ENCODE measurements at regions of chr6 and their contacts with region 1.

Region 1: GRCh38 chr6:37169496-37170272 is at the start of gene PIM1:
- DNase-seq: peak; percentile 62
- ATAC-seq: peak; percentile 88
- H3K4me3 ChIP-seq: peak within 1 kb of the TSS; percentile 83
- H3K27ac ChIP-seq: peak within 1 kb of the TSS; percentile 65
- H3K4me1 ChIP-seq: peaks cover 16% of the 10 kb centered on the region
- H3K27me3 ChIP-seq: no peaks in the 10 kb centered on the region
- CTCF ChIP-seq: peak in 1 of 3 experiments; percentile 6; a peak in 1 of 6 replicates
- EP300 ChIP-seq: no peak
- POLR2A ChIP-seq: peak; percentile 81
- RAD21 ChIP-seq: no peak
- polyA plus RNA-seq, gene PIM1: 0.66 to 3.0 TPM

Region 2: DNA sequence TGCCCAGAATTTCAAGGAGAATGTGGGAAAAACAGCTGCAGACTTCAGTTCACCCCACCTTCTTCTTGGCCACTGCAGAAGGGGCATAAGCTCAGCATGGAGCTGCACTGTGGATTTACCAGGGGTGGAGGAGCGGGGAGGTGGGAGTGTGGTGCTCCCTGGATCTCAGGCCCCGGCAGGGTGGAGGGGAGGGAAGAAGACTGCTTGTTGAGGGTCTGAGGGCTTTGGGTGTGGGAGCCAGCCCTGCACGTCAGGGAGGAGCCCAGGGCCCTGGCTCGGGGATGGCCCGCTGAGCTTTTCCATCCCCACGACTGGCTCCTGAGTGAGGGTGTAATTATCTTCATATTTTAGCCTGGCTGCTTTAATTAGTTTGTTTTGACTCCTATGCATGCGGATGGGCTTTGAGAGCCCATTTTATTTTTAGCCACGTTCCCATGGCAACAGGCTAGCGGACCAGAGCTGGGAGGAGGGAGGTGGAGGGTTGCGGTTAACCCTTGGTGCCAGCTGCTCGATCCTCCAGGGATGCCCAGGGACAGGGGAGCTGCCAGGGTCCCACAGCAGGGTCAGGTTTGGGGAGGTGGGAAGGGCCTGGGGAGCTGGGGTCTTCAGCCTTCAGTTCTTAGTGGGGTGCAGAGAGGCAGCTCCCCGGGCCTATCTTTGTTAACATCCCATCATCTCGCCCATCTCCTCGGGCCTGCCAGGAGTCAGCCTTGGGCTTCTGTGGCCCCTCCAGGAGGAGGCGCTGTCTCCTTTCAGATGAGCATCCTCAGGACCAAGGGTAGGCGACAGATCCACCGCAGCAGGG is 403.9 kb before region 1 on chr6:
- CTCF ChIA-PET with region 1: interaction called, 21 read pairs
- POLR2A ChIA-PET with region 1: interaction called, 3 read pairs
- RAD21 ChIA-PET with region 1: interaction called, 7 read pairs
- SMC1A ChIA-PET with region 1: interaction called, 14 read pairs
- in situ Hi-C with region 1: loop called (anchors 10 kb)
- intact Hi-C with region 1: loop called (anchors 10 kb)
- DNase-seq: no peak
- ATAC-seq: peak; percentile 98
- H3K4me3 ChIP-seq: no peak overlapping the region
- H3K27ac ChIP-seq: no peak overlapping the region
- H3K4me1 ChIP-seq: peaks cover 17% of the 10 kb centered on the region
- H3K27me3 ChIP-seq: no peaks in the 10 kb centered on the region
- CTCF ChIP-seq: peak; percentile 97 to 98 (median 98); a peak in 5 of 6 replicates
- EP300 ChIP-seq: no peak
- POLR2A ChIP-seq: no peak
- RAD21 ChIP-seq: peak; percentile 98

Region 3: GRCh38 chr6:37029249-37029971 is 140.3 kb before region 1 on chr6:
- CTCF ChIA-PET with region 1: interaction called, 76 read pairs
- POLR2A ChIA-PET with region 1: interaction called, 3 read pairs
- RAD21 ChIA-PET with region 1: interaction called, 46 read pairs
- SMC1A ChIA-PET with region 1: interaction called, 41 read pairs
- in situ Hi-C with region 1: loop called (anchors 10 kb)
- intact Hi-C with region 1: loop called (anchors 1 kb)
- DNase-seq: no peak
- ATAC-seq: peak; percentile 90
- H3K4me3 ChIP-seq: no peak overlapping the region
- H3K27ac ChIP-seq: no peak overlapping the region
- H3K4me1 ChIP-seq: no peaks in the 10 kb centered on the region
- H3K27me3 ChIP-seq: no peaks in the 10 kb centered on the region
- CTCF ChIP-seq: peak; percentile 68 to 75 (median 72)
- EP300 ChIP-seq: no peak
- POLR2A ChIP-seq: no peak
- RAD21 ChIP-seq: peak; percentile 88

Region 4: GRCh38 chr6:37102279-37103168 is 67.2 kb before region 1 on chr6:
- CTCF ChIA-PET with region 1: interaction called, 6 read pairs
- POLR2A ChIA-PET with region 1: interaction called, 4 read pairs
- RAD21 ChIA-PET with region 1: interaction called, 28 read pairs
- SMC1A ChIA-PET with region 1: interaction called, 9 read pairs
- in situ Hi-C with region 1: no loop called
- intact Hi-C with region 1: no loop called
- DNase-seq: no peak
- ATAC-seq: peak; percentile 93
- H3K4me3 ChIP-seq: peak overlapping the region; percentile 47
- H3K27ac ChIP-seq: no peak overlapping the region
- H3K4me1 ChIP-seq: peaks cover 35% of the 10 kb centered on the region
- H3K27me3 ChIP-seq: no peaks in the 10 kb centered on the region
- CTCF ChIP-seq: no peak
- EP300 ChIP-seq: peak in 1 of 2 experiments; percentile 90; a peak in 2 of 4 replicates
- POLR2A ChIP-seq: peak; percentile 41; the same call in 1 of the 2 replicates
- RAD21 ChIP-seq: no peak

Region 5: DNA sequence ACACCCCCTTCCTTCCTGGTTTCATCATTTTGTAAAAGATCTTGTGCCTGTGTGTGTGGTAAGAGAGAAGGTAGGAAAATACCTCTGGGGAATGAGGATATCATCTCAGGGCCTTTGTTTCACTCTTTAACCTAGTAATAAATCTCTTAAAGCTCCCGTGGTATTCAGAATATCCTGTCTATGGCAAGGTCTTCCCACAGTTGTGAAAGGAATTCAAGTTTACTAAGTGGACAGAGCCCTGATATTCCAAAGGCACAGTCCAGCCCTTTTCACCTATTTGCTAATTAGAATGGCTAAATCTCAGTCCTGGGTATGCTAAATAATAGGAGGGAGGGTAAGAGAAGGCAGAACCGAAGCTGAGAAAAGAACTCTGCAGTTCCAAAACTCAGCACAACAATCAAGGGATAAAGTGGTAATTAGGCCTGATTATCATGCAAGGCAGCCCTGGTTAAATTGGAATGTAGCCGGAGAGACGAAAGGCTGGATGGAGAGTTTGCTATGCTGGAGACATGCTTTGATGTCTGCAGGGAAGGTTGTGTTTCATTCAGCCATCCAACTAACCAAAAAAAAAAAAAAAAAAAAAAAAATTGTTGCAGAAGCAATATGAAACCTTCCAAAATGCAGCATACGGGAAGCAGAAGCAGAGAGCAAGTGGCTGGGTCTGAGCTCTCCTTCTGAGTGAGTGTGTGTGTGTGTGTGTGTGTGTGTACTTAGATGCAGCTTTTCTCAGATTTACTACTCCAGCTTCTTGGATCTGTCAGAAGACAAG is 28.2 kb before region 1 on chr6:
- CTCF ChIA-PET with region 1: interaction called, 8 read pairs
- POLR2A ChIA-PET with region 1: interaction called, 4 read pairs
- RAD21 ChIA-PET with region 1: interaction called, 39 read pairs
- SMC1A ChIA-PET with region 1: interaction called, 12 read pairs
- in situ Hi-C with region 1: no loop called
- intact Hi-C with region 1: no loop called
- DNase-seq: no peak
- ATAC-seq: peak; percentile 44
- H3K4me3 ChIP-seq: no peak overlapping the region
- H3K27ac ChIP-seq: no peak overlapping the region
- H3K4me1 ChIP-seq: peaks cover 47% of the 10 kb centered on the region
- H3K27me3 ChIP-seq: no peaks in the 10 kb centered on the region
- CTCF ChIP-seq: no peak
- EP300 ChIP-seq: no peak
- POLR2A ChIP-seq: no peak
- RAD21 ChIP-seq: no peak

Region 6: DNA sequence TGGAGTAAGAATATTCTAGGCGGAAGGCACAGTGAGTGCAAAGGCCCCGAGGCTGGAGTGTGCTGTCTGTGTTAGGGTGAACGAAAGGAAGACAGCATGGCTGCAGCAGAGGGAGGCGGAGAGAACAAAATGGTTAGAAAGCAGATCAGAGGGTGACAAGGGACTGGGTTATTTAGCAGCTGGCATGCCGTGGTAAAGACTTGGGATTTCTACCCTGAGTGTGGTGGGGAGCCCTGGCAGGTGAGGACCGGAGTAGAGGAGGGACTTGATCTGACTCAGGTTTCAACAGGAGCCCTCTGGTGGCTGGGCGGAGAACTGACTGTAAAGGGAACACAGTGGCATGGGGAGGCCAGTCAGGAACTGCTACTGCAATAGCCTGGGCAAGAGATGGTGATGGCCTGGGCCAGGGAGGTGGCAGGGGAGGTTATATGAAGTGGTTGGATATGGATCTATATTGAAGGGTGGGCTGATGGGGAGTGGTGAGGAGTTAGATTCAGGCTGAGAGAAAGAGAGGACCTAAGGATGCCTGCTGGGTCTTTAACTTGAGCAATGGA is 38.3 kb after region 1 on chr6:
- CTCF ChIA-PET with region 1: interaction called, 75 read pairs
- POLR2A ChIA-PET with region 1: interaction called, 3 read pairs
- RAD21 ChIA-PET with region 1: interaction called, 34 read pairs
- SMC1A ChIA-PET with region 1: interaction called, 18 read pairs
- in situ Hi-C with region 1: no loop called
- intact Hi-C with region 1: loop called (anchors 1 kb)
- DNase-seq: peak; percentile 28
- ATAC-seq: peak; percentile 96
- H3K4me3 ChIP-seq: no peak overlapping the region
- H3K27ac ChIP-seq: no peak overlapping the region
- H3K4me1 ChIP-seq: peaks cover 3% of the 10 kb centered on the region; the same call in 1 of the 2 replicates
- H3K27me3 ChIP-seq: no peaks in the 10 kb centered on the region
- CTCF ChIP-seq: peak; percentile 87 to 93 (median 87)
- EP300 ChIP-seq: no peak
- POLR2A ChIP-seq: no peak
- RAD21 ChIP-seq: peak; percentile 63

Region 7: DNA sequence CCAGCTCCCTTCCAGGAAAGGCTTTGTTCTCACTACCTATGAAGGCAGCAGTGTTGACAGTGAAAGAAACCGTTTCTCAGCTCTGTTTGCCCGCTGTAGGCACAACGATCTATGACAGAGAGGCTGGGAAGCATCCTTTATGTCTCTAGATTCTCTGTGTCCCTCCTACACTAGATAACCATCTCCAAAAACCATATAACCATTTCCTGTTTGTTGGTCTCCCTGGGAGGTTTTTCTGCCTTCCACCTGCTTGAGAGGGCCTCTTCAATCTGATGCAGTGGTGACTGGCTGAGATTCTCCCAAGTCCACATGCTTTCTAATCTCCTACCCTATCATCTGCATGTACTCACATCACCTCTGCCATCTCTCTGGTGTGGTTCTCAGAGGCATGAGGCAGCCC is 120.2 kb after region 1 on chr6:
- CTCF ChIA-PET with region 1: no interaction called
- POLR2A ChIA-PET with region 1: no interaction called
- RAD21 ChIA-PET with region 1: no interaction called
- SMC1A ChIA-PET with region 1: no interaction called
- in situ Hi-C with region 1: no loop called
- intact Hi-C with region 1: no loop called
- DNase-seq: no peak
- ATAC-seq: no peak
- H3K4me3 ChIP-seq: no peak overlapping the region
- H3K27ac ChIP-seq: no peak overlapping the region
- H3K4me1 ChIP-seq: peaks cover 18% of the 10 kb centered on the region
- H3K27me3 ChIP-seq: no peaks in the 10 kb centered on the region
- CTCF ChIP-seq: no peak
- EP300 ChIP-seq: no peak
- POLR2A ChIP-seq: no peak
- RAD21 ChIP-seq: no peak

Region 8: DNA sequence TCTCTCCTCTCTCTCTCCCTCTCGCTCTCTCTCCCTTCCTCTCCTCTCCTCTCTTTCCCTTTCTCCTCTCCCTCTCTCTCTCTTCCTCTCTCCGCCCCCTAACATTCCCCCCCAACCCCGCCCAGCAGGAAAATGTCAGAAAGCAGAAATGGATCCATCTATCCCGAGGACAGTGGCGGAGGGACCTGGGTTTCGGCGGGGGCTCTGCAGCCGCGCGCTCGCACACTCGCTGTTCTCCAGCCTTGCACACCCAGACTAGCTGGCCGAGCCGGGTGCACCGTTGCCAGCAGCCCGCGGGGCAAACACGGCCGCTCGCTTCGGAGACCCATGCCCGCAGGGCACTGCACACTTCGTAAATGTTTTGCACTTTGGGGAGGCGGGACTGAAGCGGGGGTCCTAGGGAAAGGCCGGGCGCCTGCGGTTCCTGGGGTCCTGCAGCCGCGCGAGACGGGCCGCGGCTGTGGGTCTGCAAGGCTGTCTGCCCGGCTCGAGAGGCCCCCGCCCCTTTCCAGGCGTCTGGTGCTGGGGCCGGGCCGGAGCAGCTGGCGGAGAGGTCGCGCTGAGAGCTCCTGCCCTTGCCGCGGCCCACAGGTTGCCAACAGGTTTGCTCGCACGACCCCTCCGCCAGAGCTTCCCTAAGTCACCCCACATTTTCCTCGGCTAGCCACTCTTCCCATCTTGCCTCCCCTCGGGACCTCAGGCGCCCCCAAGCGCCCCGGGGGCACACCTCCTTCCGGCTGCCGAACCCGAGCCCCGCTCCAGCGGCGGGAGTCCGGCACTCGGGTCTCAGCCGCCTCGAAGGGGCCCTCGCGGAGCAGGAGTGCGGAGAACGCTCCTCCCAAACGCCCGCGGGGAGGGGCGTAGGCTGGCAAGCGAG is 528.8 kb after region 1 on chr6:
- CTCF ChIA-PET with region 1: no interaction called
- POLR2A ChIA-PET with region 1: no interaction called
- RAD21 ChIA-PET with region 1: no interaction called
- SMC1A ChIA-PET with region 1: no interaction called
- in situ Hi-C with region 1: no loop called
- intact Hi-C with region 1: no loop called
- DNase-seq: no peak
- ATAC-seq: peak; percentile 51
- H3K4me3 ChIP-seq: peak overlapping the region; percentile 67
- H3K27ac ChIP-seq: no peak overlapping the region
- H3K4me1 ChIP-seq: peaks cover 11% of the 10 kb centered on the region
- H3K27me3 ChIP-seq: peaks cover 22 to 26% of the 10 kb centered on the region in 2 experiments
- CTCF ChIP-seq: no peak
- EP300 ChIP-seq: no peak
- POLR2A ChIP-seq: no peak
- RAD21 ChIP-seq: no peak